GM12878 (cell line): ENCODE measurements at regions of chr6 and their contacts with region 1.

Region 1: DNA sequence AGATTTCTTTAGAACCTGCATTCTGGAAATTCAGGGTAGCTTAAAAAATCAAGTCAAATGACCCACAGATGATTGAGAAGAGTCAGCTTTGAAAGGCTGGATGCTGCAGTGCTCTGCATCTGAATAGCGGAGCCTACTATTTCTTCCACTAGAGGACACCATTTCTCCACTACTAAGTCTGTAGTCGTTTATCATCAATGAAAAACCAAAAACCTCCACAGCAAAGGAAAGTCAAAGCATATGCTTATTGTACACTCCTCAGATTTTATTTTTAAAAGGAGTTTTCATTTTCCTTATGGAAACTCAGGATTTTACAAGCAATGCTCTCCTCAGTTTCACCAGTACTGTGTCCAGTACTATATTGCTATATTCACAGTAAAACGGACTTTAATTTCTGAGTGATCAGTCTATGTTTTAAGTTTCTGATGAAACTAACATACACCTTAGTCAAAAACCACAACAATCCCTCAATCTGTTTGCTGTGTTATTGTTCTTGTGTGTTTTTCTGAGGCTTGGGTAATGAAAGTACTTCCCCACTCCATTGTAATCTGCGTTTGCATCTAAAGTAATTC is 50.5 kb upstream of the ENPP5 start:
- DNase-seq: peak; percentile 48
- ATAC-seq: peak; percentile 81
- H3K4me3 ChIP-seq: no peak overlapping the region
- H3K27ac ChIP-seq: no peak overlapping the region
- H3K4me1 ChIP-seq: peaks cover 29% of the 10 kb centered on the region
- H3K27me3 ChIP-seq: no peaks in the 10 kb centered on the region; a peak in 1 of 4 replicates
- CTCF ChIP-seq: peak; percentile 83 to 90 (median 90)
- EP300 ChIP-seq: no peak
- POLR2A ChIP-seq: no peak
- RAD21 ChIP-seq: peak; percentile 98

Region 2: DNA sequence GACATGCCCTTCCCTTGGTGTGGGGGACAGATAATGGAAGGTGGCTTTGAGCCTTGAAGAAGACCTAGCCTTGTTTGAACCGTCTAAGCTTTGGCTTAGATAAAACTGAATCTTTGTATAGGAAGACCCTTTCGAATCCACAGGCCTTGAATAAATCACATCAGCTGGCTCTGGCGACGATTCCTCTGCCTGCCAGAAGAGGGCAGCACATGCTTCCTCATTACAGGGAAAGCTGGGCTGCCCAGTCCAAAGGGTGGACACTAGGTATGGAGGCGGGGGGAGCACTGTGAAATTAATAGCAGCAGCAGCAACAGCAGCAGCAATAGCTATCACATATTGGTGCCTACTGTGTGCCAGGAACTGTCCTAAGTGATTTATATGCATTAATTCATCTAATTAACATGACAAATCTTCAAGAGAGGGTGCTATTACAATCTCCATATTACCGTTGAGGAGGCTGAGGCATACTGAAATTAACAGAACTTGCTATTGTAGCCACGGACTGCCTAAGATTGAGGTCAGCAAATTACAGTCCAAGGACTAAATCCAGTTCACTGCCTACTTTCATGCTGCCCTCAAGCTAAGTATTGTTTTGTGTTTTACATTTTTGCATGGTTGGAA is 290.8 kb before region 1 on chr6:
- CTCF ChIA-PET with region 1: interaction called, 8 read pairs
- POLR2A ChIA-PET with region 1: no interaction called
- RAD21 ChIA-PET with region 1: interaction called, 3 read pairs
- SMC1A ChIA-PET with region 1: no interaction called
- in situ Hi-C with region 1: no loop called
- intact Hi-C with region 1: loop called (anchors 5 kb)
- DNase-seq: no peak
- ATAC-seq: peak; percentile 84
- H3K4me3 ChIP-seq: no peak overlapping the region
- H3K27ac ChIP-seq: no peak overlapping the region
- H3K4me1 ChIP-seq: no peaks in the 10 kb centered on the region
- H3K27me3 ChIP-seq: peaks cover 1 to 3% of the 10 kb centered on the region in 2 experiments; a peak in 1 of 4 replicates
- CTCF ChIP-seq: peak; percentile 86 to 97 (median 96)
- EP300 ChIP-seq: no peak
- POLR2A ChIP-seq: no peak
- RAD21 ChIP-seq: peak; percentile 73

Region 3: DNA sequence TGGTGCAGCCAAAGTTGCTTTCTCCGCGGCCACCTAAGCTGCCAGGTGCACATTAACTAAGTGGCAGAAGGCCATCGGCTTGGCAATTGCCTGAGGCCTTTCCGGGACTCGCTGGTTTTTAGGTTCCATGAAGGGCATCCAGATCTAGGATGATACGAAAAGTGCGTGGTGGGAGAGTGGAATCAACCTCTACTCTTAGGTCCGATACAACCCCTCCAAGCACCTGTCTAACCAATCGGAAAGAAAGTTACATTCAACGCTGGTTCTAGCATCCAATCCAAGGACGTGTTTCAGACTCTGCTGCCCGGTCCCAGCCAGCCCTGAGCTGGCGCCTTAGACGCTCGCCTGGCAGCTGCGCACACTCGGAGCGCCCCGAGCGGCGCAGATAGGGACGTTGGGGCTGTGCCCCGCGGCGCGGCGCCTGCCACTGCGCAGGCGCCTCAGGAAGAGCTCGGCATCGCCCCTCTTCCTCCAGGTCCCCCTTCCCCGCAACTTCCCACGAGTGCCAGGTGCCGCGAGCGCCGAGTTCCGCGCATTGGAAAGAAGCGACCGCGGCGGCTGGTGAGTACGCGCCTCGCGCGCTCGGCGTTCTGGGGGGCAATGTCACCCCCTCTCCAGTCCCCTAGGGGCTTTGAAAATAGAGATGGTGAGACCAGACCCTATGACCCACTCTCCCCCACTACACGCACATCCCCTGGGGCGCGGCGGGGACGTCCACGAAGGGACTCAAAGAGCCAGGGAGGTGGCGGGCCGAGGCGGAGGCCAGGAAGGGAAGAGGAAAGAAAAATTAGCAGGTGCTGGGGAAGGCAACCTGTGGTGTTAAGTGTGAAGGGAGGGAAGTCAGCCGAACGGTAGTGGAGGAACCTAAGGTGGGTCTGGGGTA is 91.4 kb before region 1 on chr6 and contains the start of gene ENPP4:
- CTCF ChIA-PET with region 1: interaction called, 12 read pairs
- POLR2A ChIA-PET with region 1: interaction called, 3 read pairs
- RAD21 ChIA-PET with region 1: interaction called, 31 read pairs
- SMC1A ChIA-PET with region 1: interaction called, 34 read pairs
- in situ Hi-C with region 1: no loop called
- intact Hi-C with region 1: no loop called
- DNase-seq: peak; percentile 100
- ATAC-seq: peak; percentile 99
- H3K4me3 ChIP-seq: peak within 1 kb of the TSS; percentile 95
- H3K27ac ChIP-seq: peak within 1 kb of the TSS; percentile 68
- H3K4me1 ChIP-seq: peaks cover 12% of the 10 kb centered on the region
- H3K27me3 ChIP-seq: no peaks in the 10 kb centered on the region
- CTCF ChIP-seq: 0 out of 6 replicates have a peak, but pooled peaks of 1 of the 3 experiments have one; percentile 6
- EP300 ChIP-seq: no peak
- POLR2A ChIP-seq: peak; percentile 80
- RAD21 ChIP-seq: no peak
- polyA plus RNA-seq, gene ENPP4: 3.3 to 5.2 TPM

Region 4: DNA sequence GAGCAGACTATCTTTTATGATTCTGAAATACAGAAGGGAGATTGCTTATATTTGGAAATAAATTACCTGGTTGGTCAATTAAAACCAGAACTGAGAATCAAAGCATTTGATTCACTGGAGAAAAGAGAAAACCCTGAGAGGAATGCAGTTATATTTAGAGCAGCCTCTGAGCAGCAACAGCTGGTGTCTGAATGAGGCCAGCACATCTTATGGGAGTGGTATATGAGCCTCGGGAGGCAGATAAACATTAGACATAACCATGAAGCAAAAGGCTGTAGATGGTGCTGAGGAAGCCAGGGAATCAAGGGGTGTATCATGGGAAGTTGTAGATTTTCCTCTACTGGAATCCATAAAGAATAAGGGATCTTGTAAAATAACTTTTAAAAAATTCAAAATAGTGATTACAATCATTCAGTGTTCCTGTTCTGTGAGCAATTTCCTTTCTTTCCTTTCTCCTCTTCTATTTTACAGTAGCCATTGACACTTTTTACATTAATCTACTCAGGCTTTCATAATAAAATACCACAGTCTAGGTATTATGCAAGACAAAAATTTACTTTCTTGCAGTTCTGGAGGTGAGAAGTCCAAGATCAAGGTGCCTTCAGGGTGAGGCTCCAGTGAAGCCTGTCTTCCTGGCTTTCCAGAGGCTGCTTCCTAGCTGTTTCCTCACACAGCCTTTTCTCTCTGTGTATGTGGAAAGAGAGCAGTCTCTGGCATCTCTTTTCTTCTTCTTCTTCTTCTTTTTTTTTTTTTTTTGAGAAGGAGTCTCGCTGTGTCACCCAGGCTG is 17.7 kb before region 1 on chr6:
- CTCF ChIA-PET with region 1: interaction called, 6 read pairs
- POLR2A ChIA-PET with region 1: no interaction called
- RAD21 ChIA-PET with region 1: interaction called, 9 read pairs
- SMC1A ChIA-PET with region 1: interaction called, 18 read pairs
- in situ Hi-C with region 1: no loop called
- intact Hi-C with region 1: no loop called
- DNase-seq: no peak
- ATAC-seq: no peak
- H3K4me3 ChIP-seq: no peak overlapping the region
- H3K27ac ChIP-seq: no peak overlapping the region
- H3K4me1 ChIP-seq: no peaks in the 10 kb centered on the region
- H3K27me3 ChIP-seq: no peaks in the 10 kb centered on the region; a peak in 1 of 4 replicates
- CTCF ChIP-seq: no peak
- EP300 ChIP-seq: no peak
- POLR2A ChIP-seq: no peak
- RAD21 ChIP-seq: no peak

Region 5: DNA sequence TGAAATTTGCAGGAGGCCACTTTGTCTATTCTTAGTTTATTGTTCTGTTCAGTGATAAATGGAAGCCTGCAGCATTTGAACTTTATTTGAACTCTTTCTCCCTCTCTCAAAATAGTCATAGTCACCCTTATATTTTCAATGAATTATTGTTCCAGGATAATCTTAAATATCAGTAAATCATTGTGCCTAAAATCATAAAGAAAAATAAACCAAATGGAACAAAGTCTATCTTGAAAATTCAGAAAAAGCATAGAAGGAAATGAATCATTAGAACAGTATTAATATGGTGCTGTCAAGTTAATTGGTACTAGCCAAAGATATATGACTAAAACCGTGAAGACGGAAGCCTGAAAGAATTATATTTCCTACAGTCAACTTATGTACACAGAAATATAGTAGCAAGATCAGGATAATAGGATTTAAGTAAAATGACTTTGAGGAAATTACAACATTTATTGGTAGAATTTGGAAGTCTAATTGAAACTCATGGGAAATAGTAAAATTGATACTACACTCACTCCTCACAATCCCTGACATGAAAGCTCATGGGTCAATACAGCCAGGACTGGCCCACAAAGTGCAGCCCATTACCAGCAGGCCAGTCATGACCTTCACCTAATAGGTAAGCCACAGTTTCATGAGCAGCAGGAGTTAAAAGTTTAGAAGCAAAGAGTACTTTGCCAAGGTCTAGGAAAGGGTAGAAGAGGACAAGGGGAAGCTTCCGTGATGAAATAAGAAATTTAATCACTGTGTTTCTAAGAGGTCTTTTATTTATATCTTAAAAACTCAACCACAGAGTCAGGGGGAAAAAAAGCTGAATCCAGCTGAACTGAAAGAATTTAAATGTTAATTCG is 69.3 kb after region 1 on chr6:
- CTCF ChIA-PET with region 1: no interaction called
- POLR2A ChIA-PET with region 1: no interaction called
- RAD21 ChIA-PET with region 1: no interaction called
- SMC1A ChIA-PET with region 1: no interaction called
- in situ Hi-C with region 1: no loop called
- intact Hi-C with region 1: no loop called
- DNase-seq: no peak
- ATAC-seq: no peak
- H3K4me3 ChIP-seq: no peak overlapping the region
- H3K27ac ChIP-seq: no peak overlapping the region
- H3K4me1 ChIP-seq: peaks cover 20% of the 10 kb centered on the region
- H3K27me3 ChIP-seq: no peaks in the 10 kb centered on the region
- CTCF ChIP-seq: no peak
- EP300 ChIP-seq: no peak
- POLR2A ChIP-seq: no peak
- RAD21 ChIP-seq: no peak

Region 6: DNA sequence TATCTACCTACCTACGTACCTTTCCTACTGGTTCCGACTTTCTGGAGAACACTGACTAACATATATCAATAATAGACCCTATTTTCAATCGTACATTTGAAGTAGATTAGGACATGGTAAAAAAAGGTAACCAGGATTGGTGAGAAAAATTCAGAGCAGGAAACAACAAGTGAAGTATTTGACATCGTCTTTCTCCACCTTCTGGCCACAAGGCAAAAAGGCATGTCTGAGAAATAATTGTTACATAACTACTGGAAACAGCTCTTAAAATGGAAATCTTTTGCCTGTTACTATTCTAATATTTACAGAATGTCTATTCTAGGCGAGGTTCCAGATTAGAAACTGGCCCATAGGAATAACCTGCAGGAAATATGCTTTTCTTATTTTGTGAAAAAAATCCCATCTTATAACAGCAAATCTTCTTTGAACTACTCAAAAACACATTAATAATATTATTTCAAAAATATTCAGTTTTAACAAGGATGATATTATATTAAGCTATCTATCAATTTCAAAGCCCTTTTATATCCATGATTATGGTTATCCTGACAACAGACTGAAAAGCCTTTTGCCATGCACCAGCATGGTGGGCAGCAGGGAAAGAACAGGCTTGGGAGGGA is 189.1 kb after region 1 on chr6:
- CTCF ChIA-PET with region 1: interaction called, 77 read pairs
- POLR2A ChIA-PET with region 1: no interaction called
- RAD21 ChIA-PET with region 1: interaction called, 63 read pairs
- SMC1A ChIA-PET with region 1: interaction called, 40 read pairs
- in situ Hi-C with region 1: no loop called
- intact Hi-C with region 1: loop called (anchors 1 kb)
- DNase-seq: peak; percentile 21
- ATAC-seq: peak; percentile 44; the same call in 1 of the 3 replicates
- H3K4me3 ChIP-seq: no peak overlapping the region
- H3K27ac ChIP-seq: no peak overlapping the region
- H3K4me1 ChIP-seq: no peaks in the 10 kb centered on the region
- H3K27me3 ChIP-seq: no peaks in the 10 kb centered on the region
- CTCF ChIP-seq: peak; percentile 46 to 61 (median 53); a peak in 5 of 6 replicates
- EP300 ChIP-seq: no peak
- POLR2A ChIP-seq: no peak
- RAD21 ChIP-seq: peak; percentile 80

Region 7: GRCh38 chr6:46491628-46492547 is 270.6 kb after region 1 on chr6:
- CTCF ChIA-PET with region 1: no interaction called
- POLR2A ChIA-PET with region 1: no interaction called
- RAD21 ChIA-PET with region 1: no interaction called
- SMC1A ChIA-PET with region 1: no interaction called
- in situ Hi-C with region 1: no loop called
- intact Hi-C with region 1: loop called (anchors 10 kb)
- DNase-seq: no peak
- ATAC-seq: peak; percentile 83
- H3K4me3 ChIP-seq: peak overlapping the region; percentile 67; the same call in 1 of the 2 replicates
- H3K27ac ChIP-seq: no peak overlapping the region
- H3K4me1 ChIP-seq: no peaks in the 10 kb centered on the region
- H3K27me3 ChIP-seq: peaks cover 3 to 9% of the 10 kb centered on the region in 2 experiments; a peak in 3 of 4 replicates
- CTCF ChIP-seq: peak; percentile 32 to 42 (median 36); a peak in 5 of 6 replicates
- EP300 ChIP-seq: no peak
- POLR2A ChIP-seq: no peak
- RAD21 ChIP-seq: peak; percentile 22; the same call in 1 of the 2 replicates

Region 8: DNA sequence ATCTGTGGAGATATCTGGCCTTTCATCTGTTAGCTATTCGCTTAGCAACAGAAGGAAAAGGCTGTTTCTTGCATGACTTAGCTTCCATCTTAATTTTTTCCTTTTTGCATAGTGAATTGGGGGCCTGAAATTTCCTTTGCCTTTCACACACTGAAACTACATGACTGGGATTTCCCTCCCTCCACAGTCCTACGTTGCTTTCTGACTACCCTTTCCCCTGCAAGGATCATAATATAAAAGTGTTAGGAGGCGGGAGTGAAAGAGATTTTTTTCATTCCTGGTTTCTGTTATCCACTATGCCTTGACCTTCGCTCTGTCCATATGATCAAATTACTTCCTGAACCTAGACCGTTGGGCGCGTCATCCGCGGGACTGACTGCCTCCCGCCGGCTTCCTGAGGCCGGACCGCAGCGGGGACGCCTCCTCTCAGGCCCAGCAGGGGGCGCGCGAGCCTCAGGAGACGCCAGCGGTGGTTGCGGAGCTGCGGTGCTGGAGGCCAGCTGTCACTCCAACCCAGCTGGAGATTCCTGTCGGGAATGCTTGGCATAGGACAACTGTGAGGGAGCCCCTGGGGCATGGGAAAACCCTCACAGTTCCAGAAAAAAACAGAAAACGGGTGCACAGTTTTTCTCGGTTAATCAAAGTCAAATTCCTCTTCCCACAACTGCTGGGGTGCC is 627.5 kb after region 1 on chr6:
- CTCF ChIA-PET with region 1: interaction called, 3 read pairs
- POLR2A ChIA-PET with region 1: no interaction called
- RAD21 ChIA-PET with region 1: interaction called, 3 read pairs
- SMC1A ChIA-PET with region 1: interaction called, 3 read pairs
- in situ Hi-C with region 1: no loop called
- intact Hi-C with region 1: loop called (anchors 10 kb)
- DNase-seq: no peak
- ATAC-seq: peak; percentile 96
- H3K4me3 ChIP-seq: no peak overlapping the region
- H3K27ac ChIP-seq: no peak overlapping the region
- H3K4me1 ChIP-seq: no peaks in the 10 kb centered on the region
- H3K27me3 ChIP-seq: no peaks in the 10 kb centered on the region; a peak in 1 of 4 replicates
- CTCF ChIP-seq: peak; percentile 79 to 94 (median 85)
- EP300 ChIP-seq: no peak
- POLR2A ChIP-seq: no peak
- RAD21 ChIP-seq: peak; percentile 68